ENCODE measurements at regions of chr4 and their contacts with region 1.

Region 1: DNA sequence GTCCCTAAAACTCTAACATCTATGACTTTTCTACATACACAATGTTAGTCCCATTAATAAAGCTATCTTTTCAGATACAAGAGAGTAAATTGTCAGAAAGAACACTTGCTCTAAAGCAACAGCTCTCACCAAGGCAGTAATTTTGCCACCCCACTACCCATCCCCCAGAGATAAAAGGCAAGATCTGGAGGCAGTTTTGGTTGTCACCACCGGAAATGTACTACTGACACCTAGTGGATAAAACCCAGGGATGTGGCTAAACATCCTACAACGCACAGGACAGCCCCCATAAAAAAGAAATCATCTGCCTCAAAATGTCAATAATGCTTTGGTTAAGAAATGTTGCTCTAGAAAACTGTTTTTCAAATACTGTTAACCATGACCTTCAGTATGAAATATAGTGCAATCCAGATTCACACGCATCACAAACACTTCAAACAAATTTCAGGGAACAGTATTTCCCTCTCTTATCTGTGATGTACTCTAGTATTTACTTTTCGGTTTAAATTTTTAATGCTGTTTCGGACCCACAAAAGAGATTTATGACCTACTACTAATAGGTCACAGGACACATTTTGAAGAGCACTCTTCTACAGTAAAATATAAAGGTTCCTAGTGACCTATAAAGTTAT is 5.1 kb downstream of the FBXL5 start:
- DNase-seq: peak in 1 of 2 experiments; percentile 51
- H3K4me3 ChIP-seq: no peak overlapping the region
- H3K27ac ChIP-seq: no peak overlapping the region
- H3K4me1 ChIP-seq: peaks cover 19% of the 10 kb centered on the region
- H3K27me3 ChIP-seq: no peaks in the 10 kb centered on the region
- CTCF ChIP-seq: peak; percentile 66

Region 2: DNA sequence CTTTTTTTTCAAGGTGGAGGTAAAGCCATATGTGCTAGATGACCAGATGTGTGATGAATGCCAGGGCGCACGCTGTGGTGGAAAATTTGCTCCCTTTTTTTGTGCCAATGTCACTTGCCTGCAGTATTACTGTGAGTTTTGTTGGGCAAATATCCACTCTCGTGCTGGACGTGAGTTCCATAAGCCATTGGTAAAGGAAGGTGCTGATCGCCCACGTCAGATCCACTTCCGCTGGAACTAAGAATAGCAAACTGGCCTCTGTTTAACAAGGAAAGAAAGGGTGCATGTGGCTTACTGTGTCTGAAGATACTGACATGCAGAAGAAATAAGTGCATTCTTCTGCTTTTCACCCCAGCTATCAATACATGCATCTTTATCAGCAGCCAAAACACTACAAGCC is 583.9 kb before region 1 on chr4:
- CTCF ChIA-PET with region 1: no interaction called
- POLR2A ChIA-PET with region 1: no interaction called
- intact Hi-C with region 1: no loop called
- DNase-seq: no peak
- H3K4me3 ChIP-seq: no peak overlapping the region
- H3K27ac ChIP-seq: no peak overlapping the region
- H3K4me1 ChIP-seq: no peaks in the 10 kb centered on the region
- H3K27me3 ChIP-seq: no peaks in the 10 kb centered on the region
- CTCF ChIP-seq: no peak

Region 3: DNA sequence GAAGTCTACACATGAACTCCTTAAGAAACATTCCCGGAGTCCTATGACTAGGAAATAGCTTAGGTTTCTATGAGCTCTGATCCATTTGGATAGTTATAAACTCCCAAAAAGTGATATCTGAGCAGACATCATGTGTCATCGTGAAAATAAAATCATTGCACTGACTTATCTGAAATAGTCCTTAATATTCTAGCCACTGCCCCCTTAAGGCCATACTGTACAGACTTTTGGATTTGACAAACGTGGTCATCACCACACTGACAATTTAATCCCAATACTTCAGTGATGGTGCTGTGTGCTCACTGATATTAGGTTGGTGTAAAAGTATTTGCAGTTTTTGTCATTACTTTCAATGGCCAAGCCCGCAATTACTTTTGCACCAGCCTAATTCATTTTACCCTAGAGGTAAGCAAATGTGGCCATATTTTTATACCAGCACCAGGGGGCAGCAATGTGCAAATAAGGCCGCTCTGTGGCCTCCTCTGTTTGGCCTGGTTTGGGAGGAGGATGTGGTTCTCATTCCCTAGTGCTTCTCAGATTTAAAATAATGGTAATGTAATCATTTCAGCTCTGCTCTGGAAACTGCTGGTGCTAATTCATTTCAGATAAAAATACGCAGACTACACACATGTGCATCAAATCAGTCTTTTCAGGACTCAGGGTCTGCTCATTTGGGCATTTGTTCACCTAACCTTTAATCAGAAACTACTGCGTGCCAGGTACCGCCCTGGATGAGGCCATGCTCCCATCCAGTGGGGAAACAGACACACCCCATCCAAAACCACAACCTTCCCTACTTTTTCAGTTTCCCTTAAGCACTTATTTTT is 418.6 kb before region 1 on chr4:
- CTCF ChIA-PET with region 1: interaction called, 13 read pairs
- POLR2A ChIA-PET with region 1: no interaction called
- intact Hi-C with region 1: loop called (anchors 10 kb)
- DNase-seq: peak in 1 of 2 experiments; percentile 61
- H3K4me3 ChIP-seq: no peak overlapping the region
- H3K27ac ChIP-seq: no peak overlapping the region
- H3K4me1 ChIP-seq: no peaks in the 10 kb centered on the region
- H3K27me3 ChIP-seq: no peaks in the 10 kb centered on the region
- CTCF ChIP-seq: peak; percentile 73

Region 4: DNA sequence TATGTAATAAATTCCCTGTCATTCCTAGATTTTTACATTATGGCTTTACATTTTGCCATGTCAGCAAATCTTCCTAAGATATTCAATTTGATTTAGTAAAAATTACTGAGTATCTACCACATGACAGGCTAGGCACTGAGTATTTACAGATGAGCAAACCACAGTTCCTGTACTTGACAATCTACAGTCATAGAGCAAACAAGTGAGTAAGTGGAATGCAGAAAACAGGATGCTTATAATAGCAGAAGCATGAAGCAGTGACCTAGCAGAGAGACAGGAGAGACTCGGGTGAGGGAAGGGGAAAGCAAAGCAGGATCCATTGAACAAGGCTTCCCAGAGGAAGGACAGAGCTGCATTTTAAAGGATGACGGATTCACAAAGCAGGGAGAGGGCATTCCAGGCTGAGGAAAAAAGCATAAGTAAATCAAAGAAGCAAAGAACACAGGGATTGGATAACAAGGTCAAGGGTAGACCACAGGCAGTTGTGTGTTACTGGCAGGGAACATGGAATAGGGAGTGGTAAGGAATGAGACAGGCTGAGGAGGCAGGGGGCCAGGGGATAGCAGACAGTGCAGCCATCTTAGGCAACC is 346.9 kb before region 1 on chr4:
- CTCF ChIA-PET with region 1: no interaction called
- POLR2A ChIA-PET with region 1: no interaction called
- intact Hi-C with region 1: no loop called
- DNase-seq: no peak
- H3K4me3 ChIP-seq: no peak overlapping the region
- H3K27ac ChIP-seq: no peak overlapping the region
- H3K4me1 ChIP-seq: no peaks in the 10 kb centered on the region
- H3K27me3 ChIP-seq: no peaks in the 10 kb centered on the region
- CTCF ChIP-seq: no peak

Region 5: DNA sequence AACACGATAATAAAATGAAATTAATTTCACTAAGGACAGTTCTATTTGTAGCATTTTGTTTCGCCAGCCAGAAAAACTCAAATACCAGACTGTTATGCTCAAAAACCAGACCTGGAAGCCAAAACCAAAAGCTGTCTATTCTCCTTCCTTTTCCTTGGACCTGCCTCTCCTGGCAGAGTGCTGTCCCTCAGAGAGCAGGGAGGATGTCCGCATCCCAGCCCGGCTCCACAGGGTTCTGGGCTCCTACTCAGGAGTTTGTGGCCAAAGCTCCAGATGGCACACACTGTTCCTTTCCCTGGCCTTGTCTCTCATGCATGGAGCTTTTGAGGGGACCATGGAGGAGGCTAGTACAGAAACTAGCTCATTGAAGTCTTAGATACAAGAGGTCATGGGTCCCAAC is 264.1 kb before region 1 on chr4:
- CTCF ChIA-PET with region 1: no interaction called
- POLR2A ChIA-PET with region 1: no interaction called
- intact Hi-C with region 1: no loop called
- DNase-seq: no peak
- H3K4me3 ChIP-seq: no peak overlapping the region
- H3K27ac ChIP-seq: no peak overlapping the region
- H3K4me1 ChIP-seq: no peaks in the 10 kb centered on the region
- H3K27me3 ChIP-seq: no peaks in the 10 kb centered on the region
- CTCF ChIP-seq: no peak

Region 6: DNA sequence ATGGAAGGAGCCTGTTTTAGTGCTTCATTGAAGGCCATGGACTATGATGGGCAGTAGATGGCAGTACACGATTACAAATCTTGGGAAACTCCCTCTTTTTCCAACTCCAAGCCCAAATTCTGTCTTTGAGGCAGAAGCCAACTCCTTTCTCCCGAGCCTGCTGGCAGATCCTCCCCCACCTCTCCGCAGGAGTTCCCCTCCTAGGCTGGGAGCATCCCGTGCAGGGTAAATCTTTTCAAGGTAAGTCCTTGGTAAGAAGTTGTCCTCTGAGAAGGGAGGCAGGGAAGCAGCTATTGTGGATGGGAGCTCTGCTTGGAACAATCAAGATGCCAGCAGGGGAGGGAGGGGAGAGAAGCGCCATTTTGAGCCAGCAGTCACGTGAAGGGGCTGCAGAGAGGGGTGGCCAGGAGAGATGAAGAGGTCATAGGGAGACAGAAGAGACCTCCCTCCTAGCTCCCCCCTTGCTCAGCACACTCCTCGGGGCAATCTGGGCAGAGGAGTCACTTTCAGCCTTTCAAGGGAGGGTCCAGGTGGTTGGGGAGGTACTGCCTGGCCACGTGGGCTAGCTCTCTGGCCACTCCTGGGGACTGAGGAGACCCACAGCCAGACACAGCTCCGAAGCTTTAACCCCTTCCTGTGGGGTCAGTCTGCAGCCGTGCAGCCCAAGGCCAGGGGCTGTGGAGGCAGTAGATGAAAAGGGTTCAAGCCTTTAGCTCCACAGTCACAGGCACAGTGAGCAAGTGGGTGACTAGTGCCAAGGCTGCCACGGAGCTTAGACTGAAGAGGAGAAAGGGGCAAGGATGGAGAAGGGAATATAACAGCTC is 170.7 kb before region 1 on chr4:
- CTCF ChIA-PET with region 1: no interaction called
- POLR2A ChIA-PET with region 1: no interaction called
- intact Hi-C with region 1: loop called (anchors 2 kb)
- DNase-seq: peak; percentile 35 to 50
- H3K4me3 ChIP-seq: no peak overlapping the region; the same call in 1 of the 2 replicates
- H3K27ac ChIP-seq: no peak overlapping the region
- H3K4me1 ChIP-seq: no peaks in the 10 kb centered on the region
- H3K27me3 ChIP-seq: no peaks in the 10 kb centered on the region
- CTCF ChIP-seq: peak; percentile 70; the same call in 1 of the 2 replicates

Region 7: GRCh38 chr4:15636835-15637234 is 13.2 kb before region 1 on chr4:
- CTCF ChIA-PET with region 1: interaction called, 10 read pairs
- POLR2A ChIA-PET with region 1: no interaction called
- intact Hi-C with region 1: no loop called
- DNase-seq: peak in 1 of 2 experiments; percentile 81
- H3K4me3 ChIP-seq: no peak overlapping the region
- H3K27ac ChIP-seq: peak overlapping the region; percentile 63
- H3K4me1 ChIP-seq: peaks cover 15% of the 10 kb centered on the region
- H3K27me3 ChIP-seq: no peaks in the 10 kb centered on the region
- CTCF ChIP-seq: no peak

Region 8: DNA sequence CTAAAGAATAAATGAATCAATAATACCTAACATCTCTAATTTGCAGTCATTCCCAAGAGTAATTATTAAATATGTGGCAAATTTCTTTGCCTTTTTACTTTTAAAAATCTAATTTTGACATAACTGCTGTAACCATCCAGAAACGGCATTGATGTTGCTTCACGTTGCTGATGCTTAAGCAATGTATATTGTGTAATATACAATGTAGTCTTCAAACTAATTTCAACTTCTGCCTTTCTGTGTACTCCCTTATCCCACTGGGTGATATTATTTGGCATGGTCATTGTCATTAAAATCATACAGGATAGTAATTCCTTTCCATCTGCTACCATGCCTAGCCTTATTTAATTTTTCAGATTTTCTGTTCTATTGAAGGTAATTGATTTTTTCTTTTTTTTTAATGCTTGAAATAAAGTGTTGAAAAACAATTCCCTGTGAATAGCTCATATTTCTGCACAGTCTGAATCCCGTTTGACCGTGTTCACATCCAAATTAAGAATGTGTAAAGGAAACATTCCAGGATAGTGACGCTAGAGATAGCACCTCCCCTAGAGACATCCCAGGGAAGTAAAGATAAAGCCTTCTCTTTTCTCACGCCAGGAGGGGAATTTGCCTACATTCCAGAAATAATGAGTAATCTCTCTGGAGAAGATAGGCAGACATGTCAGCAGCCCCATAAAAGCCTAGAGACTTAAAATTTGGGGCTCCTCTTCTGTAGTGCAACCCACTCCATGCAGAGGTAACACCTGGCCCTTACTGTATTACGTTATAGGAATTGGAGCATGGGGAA is 40.2 kb after region 1 on chr4:
- CTCF ChIA-PET with region 1: no interaction called
- POLR2A ChIA-PET with region 1: interaction called, 4 read pairs
- intact Hi-C with region 1: loop called (anchors 5 kb)
- DNase-seq: peak; percentile 47 to 88
- H3K4me3 ChIP-seq: no peak overlapping the region
- H3K27ac ChIP-seq: peak overlapping the region; percentile 82
- H3K4me1 ChIP-seq: peaks cover 37% of the 10 kb centered on the region
- H3K27me3 ChIP-seq: no peaks in the 10 kb centered on the region
- CTCF ChIP-seq: no peak

Measured in PC-9 (cell line).